CD4-positive, alpha-beta memory T cell (primary cell): ENCODE measurements at regions of chr14 and their contacts with region 1.

Region 1: DNA sequence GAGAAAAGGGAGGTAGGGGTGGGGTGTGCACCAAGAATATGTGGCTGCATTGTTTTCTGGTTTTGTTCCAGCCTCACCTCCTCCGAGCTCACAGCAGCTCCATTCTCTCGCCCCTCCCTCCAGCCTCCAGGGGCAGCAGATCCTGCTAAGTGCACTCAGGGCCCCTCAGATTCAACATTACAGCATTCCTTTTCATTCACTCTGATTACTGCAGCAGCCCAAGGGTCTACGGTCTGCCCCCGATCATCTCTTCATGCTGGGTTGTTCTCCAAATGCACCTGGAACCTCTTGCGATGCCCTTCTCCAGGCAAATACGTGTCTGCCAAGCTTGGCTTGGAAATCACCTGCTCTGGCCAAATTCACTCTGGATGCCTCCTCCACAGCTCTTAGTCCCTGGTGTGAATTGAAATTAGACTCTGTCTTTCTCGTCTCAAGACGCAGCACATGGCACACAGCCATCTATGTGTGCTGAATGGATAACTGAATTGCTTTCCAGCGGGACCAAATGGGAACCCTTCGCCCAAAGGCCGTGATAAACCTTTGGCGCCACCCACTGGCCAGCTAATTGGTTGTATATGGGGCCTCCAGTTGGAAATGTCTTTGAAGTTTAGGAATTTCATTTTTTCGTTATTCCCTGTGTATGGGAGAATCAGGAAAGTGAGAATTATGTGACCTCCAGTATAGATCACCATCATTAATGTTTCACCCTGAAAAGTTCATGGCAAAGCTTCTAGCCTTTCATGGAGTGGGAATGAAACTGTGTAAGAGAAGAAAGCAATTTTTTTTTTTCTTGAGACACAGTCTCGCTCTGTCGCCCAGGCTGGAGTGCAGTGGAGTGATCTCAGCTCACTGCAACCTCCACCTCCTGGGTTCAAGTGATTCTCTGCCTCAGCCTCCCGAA is 9.6 kb upstream of the HSP90AA1 start:
- DNase-seq: peak; percentile 45 to 66 (median 52)
- H3K4me3 ChIP-seq: no peak overlapping the region
- H3K4me3 Mint-ChIP-seq: no peak overlapping the region
- H3K27ac ChIP-seq: no peak overlapping the region
- H3K27ac Mint-ChIP-seq: peak overlapping the region in 3 of 7 donors; percentile 74 to 75 (median 74)
- H3K4me1 ChIP-seq: no peaks in the 10 kb centered on the region
- H3K4me1 Mint-ChIP-seq: peaks cover 0 to 4% (median under 1%) of the 10 kb centered on the region in 4 donors
- H3K27me3 ChIP-seq: no peaks in the 10 kb centered on the region
- H3K27me3 Mint-ChIP-seq: no peaks in the 10 kb centered on the region

Region 2: GRCh38 chr14:101737414-101738339 is 358.8 kb before region 1 on chr14:
- CTCF ChIA-PET with region 1: no interaction called
- POLR2A ChIA-PET with region 1: no interaction called
- intact Hi-C with region 1: no loop called
- DNase-seq: peak in 1 of 5 donors; percentile 28
- H3K4me3 ChIP-seq: no peak overlapping the region
- H3K4me3 Mint-ChIP-seq: no peak overlapping the region
- H3K27ac ChIP-seq: no peak overlapping the region
- H3K27ac Mint-ChIP-seq: peak overlapping the region; percentile 8 to 92 (median 59)
- H3K4me1 ChIP-seq: peaks cover 13% of the 10 kb centered on the region
- H3K4me1 Mint-ChIP-seq: peaks cover 5 to 25% (median 9%) of the 10 kb centered on the region in 4 donors
- H3K27me3 ChIP-seq: no peaks in the 10 kb centered on the region
- H3K27me3 Mint-ChIP-seq: no peaks in the 10 kb centered on the region

Region 3: DNA sequence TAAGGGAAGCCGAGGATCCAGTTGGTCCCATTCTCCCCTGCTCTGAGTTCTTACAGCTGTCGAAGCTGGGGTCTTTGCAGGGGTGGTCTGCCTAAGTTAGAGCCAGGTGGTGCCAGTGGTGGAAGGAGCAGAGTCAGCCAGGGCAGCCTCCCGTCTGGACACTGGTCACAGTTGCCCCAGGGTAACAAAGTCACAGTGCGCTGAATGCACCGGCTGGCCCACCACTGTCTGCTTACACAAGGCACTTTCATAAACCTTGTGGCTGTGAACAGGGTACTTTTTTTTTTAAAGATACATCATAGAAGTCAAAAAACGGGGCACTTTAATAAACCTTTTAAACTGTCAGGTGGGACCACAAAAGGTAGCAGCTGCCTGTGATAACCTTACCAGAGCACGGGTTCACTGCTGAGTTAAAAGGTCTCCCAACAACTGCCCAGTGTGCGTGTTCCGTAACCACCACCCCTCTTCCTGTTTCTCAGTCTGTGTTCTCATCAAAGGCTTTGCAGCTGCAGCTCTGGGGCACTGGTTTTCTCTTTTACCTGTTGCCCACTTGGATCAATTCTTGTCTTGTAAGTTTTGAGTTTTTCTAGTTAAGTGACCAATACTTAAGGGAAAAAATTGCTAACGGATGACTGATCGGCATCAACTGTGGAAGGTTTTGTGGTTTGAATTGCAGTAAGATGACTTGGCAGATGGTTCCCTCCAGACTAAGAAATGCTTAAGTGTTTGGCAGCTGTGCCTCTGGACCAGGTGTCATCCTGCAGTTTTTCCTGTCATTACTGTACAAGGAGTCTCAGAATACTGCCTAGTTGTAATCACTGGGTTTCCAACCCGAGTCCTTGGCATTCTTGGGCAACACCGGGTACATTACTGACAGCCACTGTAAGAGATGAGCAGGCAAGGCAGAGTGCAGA is 76.1 kb before region 1 on chr14:
- CTCF ChIA-PET with region 1: interaction called, 10 read pairs
- POLR2A ChIA-PET with region 1: no interaction called
- intact Hi-C with region 1: no loop called
- DNase-seq: peak in 4 of 5 donors; percentile 17 to 40 (median 26)
- H3K4me3 ChIP-seq: no peak overlapping the region
- H3K4me3 Mint-ChIP-seq: peak overlapping the region in 3 of 8 donors; percentile 28 to 59 (median 40)
- H3K27ac ChIP-seq: no peak overlapping the region
- H3K27ac Mint-ChIP-seq: peak overlapping the region; percentile 27 to 87 (median 70)
- H3K4me1 ChIP-seq: peaks cover 12% of the 10 kb centered on the region
- H3K4me1 Mint-ChIP-seq: peaks cover 2 to 11% (median 8%) of the 10 kb centered on the region in 4 donors
- H3K27me3 ChIP-seq: no peaks in the 10 kb centered on the region
- H3K27me3 Mint-ChIP-seq: no peaks in the 10 kb centered on the region

Region 4: GRCh38 chr14:102050625-102051024 is 45.8 kb before region 1 on chr14:
- CTCF ChIA-PET with region 1: interaction called, 14 read pairs
- POLR2A ChIA-PET with region 1: no interaction called
- intact Hi-C with region 1: no loop called
- DNase-seq: no peak
- H3K4me3 ChIP-seq: no peak overlapping the region
- H3K4me3 Mint-ChIP-seq: no peak overlapping the region
- H3K27ac ChIP-seq: no peak overlapping the region
- H3K27ac Mint-ChIP-seq: no peak overlapping the region
- H3K4me1 ChIP-seq: no peaks in the 10 kb centered on the region
- H3K4me1 Mint-ChIP-seq: no peaks in the 10 kb centered on the region
- H3K27me3 ChIP-seq: no peaks in the 10 kb centered on the region
- H3K27me3 Mint-ChIP-seq: no peaks in the 10 kb centered on the region

Region 5: GRCh38 chr14:102063091-102063802 is 33.2 kb before region 1 on chr14:
- CTCF ChIA-PET with region 1: interaction called, 73 read pairs
- POLR2A ChIA-PET with region 1: interaction called, 6 read pairs
- intact Hi-C with region 1: loop called (anchors 1 kb)
- DNase-seq: peak; percentile 65 to 78 (median 69)
- H3K4me3 ChIP-seq: no peak overlapping the region
- H3K4me3 Mint-ChIP-seq: no peak overlapping the region
- H3K27ac ChIP-seq: no peak overlapping the region
- H3K27ac Mint-ChIP-seq: no peak overlapping the region
- H3K4me1 ChIP-seq: no peaks in the 10 kb centered on the region
- H3K4me1 Mint-ChIP-seq: peaks cover 1 to 2% (median 2%) of the 10 kb centered on the region in 4 donors
- H3K27me3 ChIP-seq: no peaks in the 10 kb centered on the region
- H3K27me3 Mint-ChIP-seq: no peaks in the 10 kb centered on the region